PC-3 (cell line): ENCODE measurements at regions of chr12 and their contacts with region 1.

Region 1: GRCh38 chr12:51636581-51636980 is 45.5 kb downstream of the SCN8A start:
- DNase-seq: peak; percentile 83
- ATAC-seq: peak; percentile 50
- H3K4me3 ChIP-seq: no peak overlapping the region
- H3K27ac ChIP-seq: peak overlapping the region; percentile 21
- H3K4me1 ChIP-seq: peaks cover 41% of the 10 kb centered on the region
- H3K27me3 ChIP-seq: no peaks in the 10 kb centered on the region
- CTCF ChIP-seq: no peak

Region 2: GRCh38 chr12:51590347-51591019 is 46.1 kb before region 1 on chr12:
- CTCF ChIA-PET with region 1: no interaction called
- POLR2A ChIA-PET with region 1: no interaction called
- intact Hi-C with region 1: loop called (anchors 1 kb)
- DNase-seq: peak; percentile 86
- ATAC-seq: peak; percentile 75
- H3K4me3 ChIP-seq: peak overlapping the region; percentile 83
- H3K27ac ChIP-seq: no peak overlapping the region
- H3K4me1 ChIP-seq: peaks cover 24% of the 10 kb centered on the region
- H3K27me3 ChIP-seq: no peaks in the 10 kb centered on the region
- CTCF ChIP-seq: peak; percentile 33; the same call in 1 of the 2 replicates

Region 3: DNA sequence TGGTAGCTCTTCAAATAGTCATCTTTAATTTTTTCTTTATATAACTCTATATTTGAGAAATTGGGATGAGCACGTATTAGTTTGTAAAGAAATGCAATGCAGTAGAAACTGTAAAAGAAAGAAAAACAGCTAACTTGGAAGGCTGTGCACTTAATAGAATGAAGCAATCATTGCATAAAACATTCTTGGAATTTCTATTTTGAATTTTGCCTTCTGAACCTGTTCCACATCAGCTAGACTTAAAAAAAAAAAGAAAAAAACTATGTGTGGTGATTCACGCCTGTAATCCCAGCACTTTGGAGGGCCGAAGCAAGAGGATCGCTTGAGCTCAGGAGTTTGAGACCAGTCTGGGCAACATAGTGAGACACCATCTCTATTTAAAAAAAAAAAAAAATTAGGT is 16.1 kb before region 1 on chr12:
- CTCF ChIA-PET with region 1: no interaction called
- POLR2A ChIA-PET with region 1: no interaction called
- intact Hi-C with region 1: no loop called
- DNase-seq: no peak
- ATAC-seq: no peak
- H3K4me3 ChIP-seq: no peak overlapping the region
- H3K27ac ChIP-seq: peak overlapping the region; percentile 78
- H3K4me1 ChIP-seq: peaks cover 32% of the 10 kb centered on the region
- H3K27me3 ChIP-seq: no peaks in the 10 kb centered on the region
- CTCF ChIP-seq: no peak

Region 4: GRCh38 chr12:51683726-51684357 is 47.3 kb after region 1 on chr12:
- CTCF ChIA-PET with region 1: no interaction called
- POLR2A ChIA-PET with region 1: no interaction called
- intact Hi-C with region 1: loop called (anchors 5 kb)
- DNase-seq: peak; percentile 93
- ATAC-seq: peak; percentile 88
- H3K4me3 ChIP-seq: peak overlapping the region; percentile 24; the same call in 1 of the 2 replicates
- H3K27ac ChIP-seq: peak overlapping the region; percentile 52
- H3K4me1 ChIP-seq: peaks cover 42% of the 10 kb centered on the region
- H3K27me3 ChIP-seq: no peaks in the 10 kb centered on the region
- CTCF ChIP-seq: no peak

Region 5: DNA sequence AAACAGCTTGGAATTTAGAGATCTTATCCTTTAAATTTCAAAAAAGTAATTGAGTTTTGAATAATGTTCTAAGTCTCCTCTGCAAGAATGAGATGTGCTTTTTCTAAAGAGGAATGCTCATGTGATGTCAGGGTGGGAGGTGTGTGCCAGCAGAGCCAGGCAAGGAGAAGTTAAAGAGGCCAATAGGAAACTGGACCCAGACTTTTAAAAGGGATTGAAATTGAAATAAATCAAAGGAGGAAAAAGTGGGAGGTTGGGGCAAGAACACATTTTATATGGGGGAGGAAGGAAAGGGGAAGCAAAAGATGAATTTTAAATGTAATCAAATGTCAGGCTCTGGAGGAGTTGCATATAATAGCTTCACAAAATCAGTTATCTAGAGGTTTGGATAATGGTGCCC is 85.8 kb after region 1 on chr12:
- CTCF ChIA-PET with region 1: no interaction called
- POLR2A ChIA-PET with region 1: interaction called, 23 read pairs
- intact Hi-C with region 1: no loop called
- DNase-seq: no peak
- ATAC-seq: no peak
- H3K4me3 ChIP-seq: no peak overlapping the region
- H3K27ac ChIP-seq: no peak overlapping the region
- H3K4me1 ChIP-seq: no peaks in the 10 kb centered on the region
- H3K27me3 ChIP-seq: no peaks in the 10 kb centered on the region
- CTCF ChIP-seq: no peak